ENCODE measurements at regions of chr15 and their contacts with region 1.

Region 1: GRCh38 chr15:78638658-78639314 is 2.2 kb downstream of the CHRNB4 start:
- DNase-seq: peak; percentile 90
- H3K4me3 ChIP-seq: peak overlapping the region in 1 of 2 experiments; percentile 40; a peak in 1 of 4 replicates
- H3K27ac ChIP-seq: peak overlapping the region in 1 of 2 experiments; percentile 98; a peak in 2 of 4 replicates
- H3K4me1 ChIP-seq: peaks cover 0 to 50% of the 10 kb centered on the region in 2 experiments; a peak in 2 of 4 replicates
- H3K27me3 ChIP-seq: peaks cover 16% of the 10 kb centered on the region
- CTCF ChIP-seq: peak; percentile 78
- EP300 ChIP-seq: peak in 1 of 2 experiments; percentile 44; a peak in 1 of 4 replicates
- RAD21 ChIP-seq: peak; percentile 92

Region 2: DNA sequence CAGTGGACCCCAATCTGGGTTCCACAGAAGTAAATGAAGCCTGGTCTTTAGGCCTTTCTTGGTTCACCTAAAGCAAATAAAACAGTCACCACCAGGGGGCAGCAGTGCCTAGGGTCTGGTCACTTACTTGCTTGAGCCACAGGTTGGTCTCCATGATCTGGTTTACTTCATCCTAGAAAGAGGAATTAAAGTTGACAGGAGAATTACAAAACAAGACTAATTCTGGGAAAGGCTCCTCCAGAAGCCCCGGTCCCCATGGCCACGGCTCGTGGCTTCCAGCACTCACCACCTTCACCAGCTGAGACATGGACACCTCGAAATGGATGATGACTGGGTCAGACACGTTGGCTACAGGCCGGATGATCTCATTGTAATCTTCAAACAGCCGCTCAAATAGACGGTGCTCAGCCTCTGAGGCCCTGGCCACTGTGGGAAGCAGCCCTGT is 20.3 kb before region 1 on chr15:
- CTCF ChIA-PET with region 1: interaction called, 57 read pairs
- POLR2A ChIA-PET with region 1: interaction called, 41 read pairs
- DNase-seq: peak; percentile 89
- H3K4me3 ChIP-seq: peak overlapping the region; percentile 16 to 59; a peak in 2 of 4 replicates
- H3K27ac ChIP-seq: peak overlapping the region; percentile 30 to 99; a peak in 3 of 4 replicates
- H3K4me1 ChIP-seq: peaks cover 4 to 43% of the 10 kb centered on the region in 2 experiments; a peak in 2 of 4 replicates
- H3K27me3 ChIP-seq: peaks cover 36% of the 10 kb centered on the region
- CTCF ChIP-seq: peak; percentile 93
- EP300 ChIP-seq: peak; percentile 91 to 93
- RAD21 ChIP-seq: peak; percentile 94

Region 3: GRCh38 chr15:78654272-78654671 is 15.5 kb after region 1 on chr15:
- CTCF ChIA-PET with region 1: interaction called, 8 read pairs
- POLR2A ChIA-PET with region 1: interaction called, 13 read pairs
- DNase-seq: no peak
- H3K4me3 ChIP-seq: no peak overlapping the region
- H3K27ac ChIP-seq: no peak overlapping the region
- H3K4me1 ChIP-seq: peaks cover 0 to 6% of the 10 kb centered on the region in 2 experiments; a peak in 1 of 4 replicates
- H3K27me3 ChIP-seq: peaks cover 5% of the 10 kb centered on the region
- CTCF ChIP-seq: no peak
- EP300 ChIP-seq: no peak
- RAD21 ChIP-seq: no peak

Region 4: DNA sequence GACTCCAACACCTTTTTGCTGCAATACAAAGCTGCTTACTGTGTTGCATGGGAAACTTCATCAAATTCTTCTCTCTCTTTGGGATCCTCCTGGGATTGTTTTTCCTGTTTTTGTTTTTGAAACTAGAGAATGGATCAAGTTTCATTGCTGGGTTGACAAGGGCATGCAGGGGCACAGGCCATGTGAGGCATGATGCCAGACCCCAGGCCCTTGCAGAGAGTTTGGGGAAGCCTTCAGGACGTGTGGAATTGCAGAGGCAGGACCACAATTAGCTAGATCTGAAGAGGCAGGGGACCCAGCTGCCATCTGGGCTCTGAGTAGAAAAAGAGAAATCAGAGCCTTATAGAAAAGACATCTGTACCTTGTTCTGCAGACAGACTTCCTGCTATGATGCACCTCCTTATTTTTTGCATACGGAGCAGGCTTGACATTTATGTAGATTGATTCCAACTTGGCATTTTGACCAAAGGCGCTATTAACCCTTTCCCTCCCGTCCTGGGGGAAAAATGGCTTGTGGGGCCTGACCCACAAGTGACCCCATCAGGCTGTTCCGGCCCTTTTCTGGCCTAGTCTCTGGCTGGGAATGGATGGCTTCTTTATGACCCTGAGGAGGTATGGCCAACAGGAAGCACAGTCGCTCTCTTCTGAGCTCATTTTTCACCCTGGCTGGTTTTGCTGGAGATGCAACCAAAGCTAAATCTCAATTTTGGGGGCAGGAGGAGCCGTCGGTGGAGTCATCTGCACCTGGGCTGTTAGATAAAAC is 46.6 kb after region 1 on chr15:
- CTCF ChIA-PET with region 1: interaction called, 49 read pairs
- POLR2A ChIA-PET with region 1: interaction called, 56 read pairs
- DNase-seq: peak; percentile 32
- H3K4me3 ChIP-seq: no peak overlapping the region
- H3K27ac ChIP-seq: peak overlapping the region in 1 of 2 experiments; percentile 93; a peak in 2 of 4 replicates
- H3K4me1 ChIP-seq: peaks cover 0 to 53% of the 10 kb centered on the region in 2 experiments; a peak in 2 of 4 replicates
- H3K27me3 ChIP-seq: peaks cover 6% of the 10 kb centered on the region; the same call in 1 of the 2 replicates
- CTCF ChIP-seq: no peak
- EP300 ChIP-seq: peak in 1 of 2 experiments; percentile 65; a peak in 1 of 4 replicates
- RAD21 ChIP-seq: no peak

Region 5: DNA sequence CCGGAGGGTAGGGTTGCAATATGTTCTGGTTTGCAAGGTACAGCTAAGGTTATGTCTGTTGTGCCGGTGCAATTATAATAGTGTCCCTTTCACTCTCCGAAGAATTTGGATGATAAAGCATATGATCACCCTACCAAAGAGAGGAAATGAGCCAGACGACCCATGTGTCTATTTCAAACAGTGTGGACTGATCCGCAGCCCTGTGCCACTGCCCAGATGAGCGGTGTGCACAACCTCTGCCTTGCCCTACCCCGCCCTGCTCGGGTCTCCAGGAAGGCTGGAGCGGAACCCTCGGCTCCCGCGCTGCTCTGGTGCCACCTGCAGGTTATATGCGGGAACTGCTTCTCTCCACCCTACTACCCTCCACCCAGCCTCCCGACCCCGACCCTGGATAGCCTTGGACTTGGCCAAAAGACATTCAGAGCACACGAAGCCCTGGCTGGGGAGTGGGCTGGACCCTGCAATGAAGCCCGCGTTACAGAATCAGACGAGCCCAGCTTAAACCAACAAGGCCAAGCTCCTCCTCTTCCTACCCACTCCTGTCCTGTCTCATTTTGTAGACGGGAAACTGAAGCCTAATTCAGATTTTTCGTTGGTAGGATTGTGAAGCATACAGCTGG is 70.6 kb after region 1 on chr15:
- CTCF ChIA-PET with region 1: interaction called, 157 read pairs
- POLR2A ChIA-PET with region 1: interaction called, 27 read pairs
- DNase-seq: peak; percentile 84
- H3K4me3 ChIP-seq: peak overlapping the region; percentile 30 to 52; a peak in 3 of 4 replicates
- H3K27ac ChIP-seq: peak overlapping the region in 1 of 2 experiments; percentile 98; a peak in 2 of 4 replicates
- H3K4me1 ChIP-seq: peaks cover 0 to 22% of the 10 kb centered on the region in 2 experiments; a peak in 2 of 4 replicates
- H3K27me3 ChIP-seq: peaks cover 10% of the 10 kb centered on the region; the same call in 1 of the 2 replicates
- CTCF ChIP-seq: peak; percentile 85
- EP300 ChIP-seq: no peak
- RAD21 ChIP-seq: peak; percentile 94

Region 6: GRCh38 chr15:78811124-78811824 is 172.5 kb after region 1 on chr15 and contains the start of gene ADAMTS7:
- CTCF ChIA-PET with region 1: interaction called, 13 read pairs
- POLR2A ChIA-PET with region 1: no interaction called
- DNase-seq: peak; percentile 99
- H3K4me3 ChIP-seq: peak within 1 kb of the TSS; percentile 65 to 74
- H3K27ac ChIP-seq: peak within 1 kb of the TSS; percentile 49 to 74
- H3K4me1 ChIP-seq: peaks cover 0 to 20% of the 10 kb centered on the region in 2 experiments; a peak in 2 of 4 replicates
- H3K27me3 ChIP-seq: no peaks in the 10 kb centered on the region
- CTCF ChIP-seq: peak; percentile 90
- EP300 ChIP-seq: no peak
- RAD21 ChIP-seq: no peak
- polyA plus RNA-seq, gene ADAMTS7: 12.7 and 17.9 TPM in 2 replicates